ENCODE measurements at regions of chr18 and their contacts with region 1.

Region 1: GRCh38 chr18:712401-713134 is at the start of gene ENOSF1:
- DNase-seq: peak in 41 of 42 donors; percentile 33 to 93 (median 78)

Region 2: GRCh38 chr18:449374-449773 is 263.2 kb before region 1 on chr18:
- intact Hi-C with region 1: no loop called
- DNase-seq: peak in 11 of 42 donors; percentile 11 to 52 (median 36)

Region 3: DNA sequence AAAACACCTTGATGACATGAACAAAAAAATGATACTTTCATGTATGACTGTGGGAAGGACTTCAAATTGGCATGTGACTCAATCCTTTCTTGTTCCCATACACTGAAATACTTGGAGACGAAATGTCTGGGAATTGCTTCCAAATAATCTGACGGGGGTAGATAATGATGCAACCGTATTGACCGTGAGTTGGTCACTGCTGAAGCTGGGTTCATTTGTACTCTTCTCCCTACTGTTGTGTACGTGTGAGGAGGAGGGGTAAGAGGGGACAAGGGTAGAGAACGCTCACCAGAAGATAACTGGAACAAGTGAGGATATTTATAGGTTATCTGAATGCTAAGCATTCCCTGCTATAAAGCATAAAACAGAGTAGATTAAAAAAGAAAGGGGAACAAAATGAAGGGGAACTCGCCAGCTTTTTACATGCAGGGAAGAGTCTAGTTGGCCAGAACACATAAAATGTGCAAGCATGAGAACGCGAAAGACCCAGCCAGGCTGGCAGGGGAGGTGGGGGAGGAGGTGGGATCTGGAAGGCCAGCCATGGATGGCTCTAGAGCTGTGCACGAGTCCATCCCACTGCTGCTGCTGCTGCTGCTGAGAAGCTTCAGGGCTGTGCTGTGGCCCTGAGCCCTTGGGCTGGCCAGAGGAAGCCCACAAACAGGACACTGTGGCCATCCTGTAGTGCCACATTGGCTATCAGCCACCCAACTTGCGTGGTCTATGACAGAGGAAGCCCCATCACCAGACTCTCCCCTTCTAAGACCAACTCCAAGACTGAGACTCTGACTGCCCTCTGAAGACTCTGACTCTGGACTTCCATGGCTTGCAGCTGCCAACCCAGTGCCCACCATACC is 147.6 kb before region 1 on chr18:
- intact Hi-C with region 1: no loop called
- DNase-seq: no peak

Region 4: DNA sequence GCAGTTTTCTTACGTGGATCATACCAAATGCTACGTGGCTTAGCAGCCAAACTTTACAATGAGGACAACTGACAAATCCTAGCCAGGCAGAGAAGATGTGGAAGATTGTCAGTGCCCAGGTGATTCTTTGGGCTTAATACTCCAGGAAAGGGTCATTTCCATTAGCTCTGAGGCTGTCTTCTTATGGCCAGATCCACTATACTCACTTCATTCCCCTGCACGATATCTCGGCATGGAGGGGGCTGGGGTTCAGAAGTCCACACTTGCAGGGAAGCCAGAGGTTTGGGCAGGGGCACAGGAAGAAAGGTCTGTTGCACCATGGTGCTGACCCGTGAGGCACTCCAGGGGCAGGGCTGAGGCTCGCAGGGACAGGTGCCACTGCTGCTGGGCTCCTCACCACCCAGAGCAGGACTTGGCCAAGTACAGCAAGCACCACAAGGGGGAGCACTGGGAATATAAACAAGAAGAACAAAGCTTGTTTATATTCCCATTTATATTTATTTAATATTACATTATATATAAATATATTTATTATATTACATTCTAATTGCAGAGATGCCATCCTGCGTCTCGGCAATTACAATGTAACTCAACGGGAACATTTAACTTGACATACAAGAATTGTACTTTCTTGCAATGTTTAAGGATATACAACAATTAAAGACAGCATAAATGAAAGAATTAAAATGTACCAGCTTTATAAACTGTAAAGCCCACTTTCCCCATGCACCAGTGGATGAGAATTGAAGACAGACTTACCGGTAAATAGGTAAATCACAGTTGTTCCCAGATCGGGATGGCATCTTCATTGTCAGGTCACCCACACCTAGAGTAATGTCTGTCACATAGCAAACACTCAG is 88.6 kb before region 1 on chr18:
- intact Hi-C with region 1: loop called (anchors 10 kb)
- DNase-seq: peak; percentile 51 to 94 (median 79)

Region 5: GRCh38 chr18:658001-658946 is 54.3 kb before region 1 on chr18:
- intact Hi-C with region 1: loop called (anchors 10 kb)
- DNase-seq: peak; percentile 74 to 96 (median 86)

Region 6: GRCh38 chr18:744832-745597 is 32.4 kb after region 1 on chr18:
- intact Hi-C with region 1: no loop called
- DNase-seq: peak in 4 of 42 donors; percentile 4 to 29 (median 12)

Region 7: DNA sequence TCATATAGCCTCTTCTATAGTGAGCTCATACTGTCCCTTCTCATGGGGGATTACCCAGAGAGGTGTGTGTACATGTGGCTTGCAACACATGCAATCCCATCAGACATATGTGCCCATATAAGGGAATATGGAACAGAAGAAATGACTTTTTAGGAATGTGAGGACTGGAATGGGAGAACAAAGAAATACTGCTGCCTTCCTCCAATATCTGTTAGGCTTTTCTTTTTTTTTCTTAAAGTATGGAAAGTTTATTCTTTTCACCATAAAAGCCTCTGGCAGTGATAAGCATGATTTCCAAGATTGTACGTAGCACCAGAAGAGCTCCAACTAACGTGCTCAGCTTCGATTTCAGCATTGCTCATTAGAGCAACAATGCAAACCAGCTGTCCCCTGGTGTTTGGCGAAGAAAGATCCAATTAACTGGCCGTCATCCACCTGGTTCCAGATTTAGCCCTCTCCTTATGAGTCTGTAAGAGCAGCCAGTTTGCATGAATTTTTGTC is 305.7 kb after region 1 on chr18:
- intact Hi-C with region 1: no loop called
- DNase-seq: no peak

Measured in head of caudate nucleus (tissue), 42 donors.